ENCODE measurements at regions of chr11 and their contacts with region 1.

Region 1: GRCh38 chr11:17276236-17277023 is at the start of gene NUCB2:
- DNase-seq: peak; percentile 87 to 100
- H3K4me3 ChIP-seq: peak within 1 kb of the TSS; percentile 67 to 78 (median 70)
- H3K27ac ChIP-seq: peak within 1 kb of the TSS; percentile 73
- H3K4me1 ChIP-seq: peaks cover 0 to 4% (median 1%) of the 10 kb centered on the region in 4 experiments; a peak in 2 of 7 replicates
- H3K27me3 ChIP-seq: peaks cover 0 to 11% (median 0%) of the 10 kb centered on the region in 4 experiments; a peak in 2 of 7 replicates
- CTCF ChIP-seq: no peak
- EP300 ChIP-seq: no peak
- POLR2A ChIP-seq: peak in 1 of 2 experiments; percentile 71; a peak in 2 of 3 replicates
- RAD21 ChIP-seq: no peak
- total RNA-seq, gene NUCB2: 27.9 and 34.2 TPM in 2 replicates

Region 2: DNA sequence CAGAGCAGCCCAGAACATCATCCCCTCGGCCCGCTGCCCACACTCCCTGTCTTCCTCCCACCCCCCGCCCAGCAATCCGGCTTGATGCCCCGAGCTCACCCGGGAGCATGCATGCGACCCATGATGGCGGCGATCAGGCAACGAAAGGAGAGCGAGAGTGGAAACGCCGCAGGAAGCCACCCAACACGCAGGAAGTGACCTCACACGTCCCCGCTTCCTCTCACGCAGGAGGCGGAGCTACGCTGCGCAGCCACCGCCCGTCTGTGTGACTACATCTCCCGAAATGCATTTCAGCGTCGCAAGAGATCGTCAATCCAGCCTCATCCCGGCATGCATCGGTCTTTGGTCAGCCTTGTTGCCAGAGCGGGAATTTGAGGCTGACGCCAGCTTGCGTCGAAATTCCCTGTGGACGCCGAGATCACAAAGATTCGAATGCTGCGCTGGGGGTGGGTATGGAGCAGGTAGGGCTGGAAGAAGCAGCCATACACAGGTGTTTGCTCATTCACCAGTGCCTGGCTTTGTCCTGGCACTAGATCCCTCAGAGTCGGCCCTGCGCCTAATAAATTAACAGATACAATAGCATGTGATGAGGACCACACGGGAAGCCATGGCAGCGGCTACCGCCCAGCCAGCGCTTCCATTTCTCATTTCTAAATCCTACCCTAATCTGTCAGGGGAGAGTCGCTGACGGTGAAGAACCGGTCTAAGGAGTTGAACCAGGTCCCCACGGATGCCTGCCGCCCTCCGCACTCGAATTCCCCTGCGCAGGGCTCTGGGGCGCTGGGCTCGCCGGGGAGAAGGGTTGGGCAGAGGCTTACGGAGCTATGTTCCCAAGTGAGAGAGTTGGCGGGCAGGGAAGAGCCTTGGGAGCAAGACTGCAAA is 198.7 kb before region 1 on chr11 and contains the start of gene RPS13:
- CTCF ChIA-PET with region 1: no interaction called
- POLR2A ChIA-PET with region 1: interaction called, 10 read pairs
- DNase-seq: peak; percentile 91 to 98
- H3K4me3 ChIP-seq: peak within 1 kb of the TSS; percentile 84 to 99 (median 94)
- H3K27ac ChIP-seq: peak within 1 kb of the TSS; percentile 97
- H3K4me1 ChIP-seq: peaks cover 0 to 5% (median 3%) of the 10 kb centered on the region in 4 experiments; a peak in 6 of 7 replicates
- H3K27me3 ChIP-seq: no peaks in the 10 kb centered on the region
- CTCF ChIP-seq: peak in 1 of 3 experiments; percentile 1; a peak in 1 of 4 replicates
- EP300 ChIP-seq: no peak
- POLR2A ChIP-seq: peak; percentile 92 to 97; a peak in 2 of 3 replicates
- RAD21 ChIP-seq: no peak
- total RNA-seq, gene RPS13: 1,310 and 1,336 TPM in 2 replicates

Region 3: GRCh38 chr11:17803754-17804334 is 527.4 kb after region 1 on chr11:
- CTCF ChIA-PET with region 1: no interaction called
- POLR2A ChIA-PET with region 1: no interaction called
- DNase-seq: no peak
- H3K4me3 ChIP-seq: no peak overlapping the region
- H3K27ac ChIP-seq: no peak overlapping the region
- H3K4me1 ChIP-seq: peaks cover 0 to 11% (median 4%) of the 10 kb centered on the region in 4 experiments; a peak in 5 of 7 replicates
- H3K27me3 ChIP-seq: no peaks in the 10 kb centered on the region; a peak in 1 of 7 replicates
- CTCF ChIP-seq: no peak
- EP300 ChIP-seq: no peak
- POLR2A ChIP-seq: no peak
- RAD21 ChIP-seq: no peak

Measured in H1 (cell line).